Naive thymus-derived CD4-positive, alpha-beta T cell (primary cell): ENCODE measurements at regions of chr13 and their contacts with region 1.

Region 1: GRCh38 chr13:44577236-44578066 is 1.3 kb upstream of the TSC22D1 start:
- DNase-seq: peak; percentile 91 to 95 (median 94)
- ATAC-seq: peak; percentile 85
- H3K4me3 ChIP-seq: peak overlapping the region; percentile 66
- H3K4me3 Mint-ChIP-seq: peak overlapping the region; percentile 78 to 99 (median 93)
- H3K27ac ChIP-seq: peak overlapping the region; percentile 84
- H3K27ac Mint-ChIP-seq: peak overlapping the region; percentile 74 to 95 (median 93)
- H3K4me1 ChIP-seq: peaks cover 16 to 27% of the 10 kb centered on the region in 2 donors
- H3K4me1 Mint-ChIP-seq: peaks cover 31 to 40% (median 38%) of the 10 kb centered on the region in 7 donors
- H3K27me3 ChIP-seq: no peaks in the 10 kb centered on the region
- H3K27me3 Mint-ChIP-seq: peaks cover 0 to 56% (median 0%) of the 10 kb centered on the region in 5 donors

Region 2: GRCh38 chr13:43878892-43879754 is 698.3 kb before region 1 on chr13 and contains the start of gene CCDC122:
- CTCF ChIA-PET with region 1: no interaction called
- POLR2A ChIA-PET with region 1: interaction called, 4 read pairs
- intact Hi-C with region 1: loop called in 1 of 2 experiments (anchors 2 kb)
- DNase-seq: peak; percentile 44 to 81 (median 65)
- ATAC-seq: peak; percentile 91
- H3K4me3 ChIP-seq: peak within 1 kb of the TSS; percentile 60
- H3K4me3 Mint-ChIP-seq: peak within 1 kb of the TSS; percentile 82 to 93 (median 90)
- H3K27ac ChIP-seq: peak within 1 kb of the TSS; percentile 72
- H3K27ac Mint-ChIP-seq: peak within 1 kb of the TSS; percentile 53 to 90 (median 81)
- H3K4me1 ChIP-seq: peaks cover 0 to 9% of the 10 kb centered on the region in 2 donors
- H3K4me1 Mint-ChIP-seq: peaks cover 15 to 27% (median 23%) of the 10 kb centered on the region in 7 donors
- H3K27me3 ChIP-seq: no peaks in the 10 kb centered on the region
- H3K27me3 Mint-ChIP-seq: peaks cover 0 to 33% (median 3%) of the 10 kb centered on the region in 5 donors
- total RNA-seq, gene CCDC122: 1.1 to 2.3 (median 1.4) TPM

Region 3: GRCh38 chr13:44435142-44435982 is 142.1 kb before region 1 on chr13:
- CTCF ChIA-PET with region 1: no interaction called
- POLR2A ChIA-PET with region 1: no interaction called
- intact Hi-C with region 1: loop called (anchors 1 to 2 kb)
- DNase-seq: peak; percentile 58 to 94 (median 78)
- ATAC-seq: peak; percentile 91
- H3K4me3 ChIP-seq: peak overlapping the region; percentile 65
- H3K4me3 Mint-ChIP-seq: peak overlapping the region; percentile 85 to 94 (median 90)
- H3K27ac ChIP-seq: peak overlapping the region; percentile 75
- H3K27ac Mint-ChIP-seq: peak overlapping the region; percentile 21 to 93 (median 83)
- H3K4me1 ChIP-seq: peaks cover 13 to 14% of the 10 kb centered on the region in 2 donors
- H3K4me1 Mint-ChIP-seq: peaks cover 14 to 34% (median 27%) of the 10 kb centered on the region in 7 donors
- H3K27me3 ChIP-seq: peaks cover 0 to 3% of the 10 kb centered on the region in 2 donors
- H3K27me3 Mint-ChIP-seq: peaks cover 6 to 73% (median 9%) of the 10 kb centered on the region in 5 donors

Region 4: GRCh38 chr13:44768239-44768638 is 190.8 kb after region 1 on chr13:
- CTCF ChIA-PET with region 1: no interaction called
- POLR2A ChIA-PET with region 1: no interaction called
- intact Hi-C with region 1: loop called in 1 of 2 experiments (anchors 1 kb)
- DNase-seq: peak in 3 of 9 donors; percentile 5 to 30 (median 23)
- ATAC-seq: peak; percentile 74
- H3K4me3 ChIP-seq: no peak overlapping the region
- H3K4me3 Mint-ChIP-seq: peak overlapping the region in 3 of 10 donors; percentile 2 to 60 (median 27)
- H3K27ac ChIP-seq: no peak overlapping the region
- H3K27ac Mint-ChIP-seq: peak overlapping the region in 4 of 9 donors; percentile 1 to 83 (median 15)
- H3K4me1 ChIP-seq: peaks cover 0 to 4% of the 10 kb centered on the region in 2 donors
- H3K4me1 Mint-ChIP-seq: peaks cover 12 to 39% (median 16%) of the 10 kb centered on the region in 7 donors
- H3K27me3 ChIP-seq: no peaks in the 10 kb centered on the region
- H3K27me3 Mint-ChIP-seq: peaks cover 0 to 9% (median 0%) of the 10 kb centered on the region in 5 donors

Region 5: DNA sequence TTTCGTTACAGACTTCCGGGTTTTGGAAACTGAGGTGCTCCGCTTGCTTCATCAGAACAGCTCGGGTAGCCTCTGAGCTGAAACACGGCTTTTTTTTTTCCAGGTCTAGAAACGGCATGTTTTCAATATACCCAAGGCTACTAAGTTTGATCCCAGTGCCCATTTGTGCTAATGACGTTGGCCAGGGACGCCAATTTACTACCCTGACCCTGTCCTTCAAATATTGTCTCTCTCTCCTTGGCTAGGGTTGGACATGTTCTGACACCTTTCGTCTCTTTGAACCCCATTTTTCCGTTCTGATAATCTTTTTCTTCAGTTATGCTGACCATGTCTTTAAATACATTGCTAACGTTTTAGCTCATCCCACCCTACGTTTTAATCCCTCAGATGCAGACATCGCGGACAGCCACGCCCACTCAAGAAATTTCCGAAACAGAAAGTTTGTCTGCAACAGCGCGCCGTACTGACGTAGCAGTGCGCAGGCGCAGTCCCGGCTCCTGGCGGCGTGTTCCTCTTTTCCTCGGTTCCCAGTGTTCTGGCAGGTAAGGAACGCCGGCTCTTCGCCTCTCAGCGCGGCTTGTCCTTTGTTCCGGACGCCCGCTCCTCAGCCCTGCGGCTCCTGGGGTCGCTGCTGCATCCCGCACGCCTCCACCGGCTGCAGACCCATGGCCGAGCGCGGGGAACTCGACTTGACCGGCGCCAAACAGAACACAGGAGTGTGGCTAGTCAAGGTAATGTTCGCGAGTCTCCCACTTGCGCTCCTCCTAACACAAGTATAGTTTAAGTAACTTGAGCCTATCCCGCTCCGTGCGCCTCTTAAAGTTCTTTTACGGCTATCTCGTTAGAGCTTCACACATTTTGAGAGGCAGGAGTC is 542.8 kb after region 1 on chr13 and contains the start of gene GTF2F2:
- CTCF ChIA-PET with region 1: no interaction called
- POLR2A ChIA-PET with region 1: no interaction called
- intact Hi-C with region 1: loop called (anchors 1 kb)
- DNase-seq: peak; percentile 81 to 89 (median 86)
- ATAC-seq: peak; percentile 80
- H3K4me3 ChIP-seq: peak within 1 kb of the TSS; percentile 80
- H3K4me3 Mint-ChIP-seq: no peak within 1 kb of the TSS
- H3K27ac ChIP-seq: peak within 1 kb of the TSS; percentile 91
- H3K27ac Mint-ChIP-seq: no peak within 1 kb of the TSS
- H3K4me1 ChIP-seq: peaks cover 16 to 21% of the 10 kb centered on the region in 2 donors
- H3K4me1 Mint-ChIP-seq: peaks cover 6 to 17% (median 13%) of the 10 kb centered on the region in 7 donors
- H3K27me3 ChIP-seq: no peaks in the 10 kb centered on the region
- H3K27me3 Mint-ChIP-seq: no peaks in the 10 kb centered on the region
- total RNA-seq, gene GTF2F2: 13.7 to 20.4 (median 15.2) TPM

Region 6: GRCh38 chr13:45464687-45465453 is 887.4 kb after region 1 on chr13 and contains the start of gene COG3:
- CTCF ChIA-PET with region 1: no interaction called
- POLR2A ChIA-PET with region 1: no interaction called
- intact Hi-C with region 1: loop called in 1 of 2 experiments (anchors 2 kb)
- DNase-seq: peak; percentile 87 to 97 (median 96)
- ATAC-seq: peak; percentile 98
- H3K4me3 ChIP-seq: peak within 1 kb of the TSS; percentile 49
- H3K4me3 Mint-ChIP-seq: peak within 1 kb of the TSS; percentile 90 to 97 (median 95)
- H3K27ac ChIP-seq: peak within 1 kb of the TSS; percentile 92
- H3K27ac Mint-ChIP-seq: peak within 1 kb of the TSS; percentile 81 to 98 (median 94)
- H3K4me1 ChIP-seq: peaks cover 10 to 28% of the 10 kb centered on the region in 2 donors
- H3K4me1 Mint-ChIP-seq: peaks cover 33 to 74% (median 59%) of the 10 kb centered on the region in 7 donors
- H3K27me3 ChIP-seq: no peaks in the 10 kb centered on the region
- H3K27me3 Mint-ChIP-seq: no peaks in the 10 kb centered on the region
- total RNA-seq, gene COG3: 29.7 to 50.1 (median 43.4) TPM